ENCODE measurements at regions of chr22 and their contacts with region 1.

Region 1: GRCh38 chr22:39490135-39490798 is 11.8 kb upstream of the MIEF1 start:
- DNase-seq: no peak
- H3K4me3 ChIP-seq: no peak overlapping the region
- H3K27me3 ChIP-seq: no peaks in the 10 kb centered on the region
- CTCF ChIP-seq: no peak

Region 2: DNA sequence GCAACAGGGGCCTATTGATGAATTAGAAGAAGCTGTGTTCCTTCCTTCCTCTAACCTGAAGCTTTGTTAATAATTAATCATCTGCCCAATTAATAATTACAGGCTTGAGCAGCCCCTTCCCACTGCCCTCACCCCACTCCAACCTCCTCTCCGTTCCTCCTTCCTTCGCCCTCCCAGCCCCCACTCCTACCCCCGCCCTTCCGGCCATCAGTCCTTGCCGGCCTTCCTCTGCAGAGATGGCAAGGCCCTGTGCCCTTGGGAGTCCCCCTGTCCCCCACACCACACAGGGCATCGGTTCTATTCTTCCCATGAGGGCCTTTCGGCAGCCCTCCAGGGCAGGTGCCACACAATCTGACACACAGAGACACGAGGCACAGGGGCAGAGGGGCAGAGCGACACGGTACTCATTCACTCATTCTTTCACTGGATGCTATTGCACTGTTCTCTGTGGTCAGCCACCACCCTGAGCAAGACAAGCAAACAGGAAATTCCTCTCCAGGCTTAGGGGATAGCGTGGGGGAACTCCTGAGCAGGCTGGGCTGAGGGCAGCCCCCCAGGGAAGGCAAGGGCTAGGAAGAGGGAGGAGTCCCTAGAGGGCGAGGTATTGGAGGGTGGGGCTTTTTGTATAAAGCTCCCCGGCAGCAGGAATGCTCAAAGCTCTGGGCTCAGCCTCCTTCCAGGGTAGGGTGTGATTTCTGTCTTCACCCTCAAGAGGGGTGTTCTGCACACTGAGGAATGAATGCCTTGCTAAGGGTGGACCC is 18.7 kb before region 1 on chr22:
- CTCF ChIA-PET with region 1: interaction called, 14 read pairs
- POLR2A ChIA-PET with region 1: no interaction called
- DNase-seq: peak; percentile 30
- H3K4me3 ChIP-seq: no peak overlapping the region
- H3K27me3 ChIP-seq: no peaks in the 10 kb centered on the region
- CTCF ChIP-seq: no peak

Region 3: DNA sequence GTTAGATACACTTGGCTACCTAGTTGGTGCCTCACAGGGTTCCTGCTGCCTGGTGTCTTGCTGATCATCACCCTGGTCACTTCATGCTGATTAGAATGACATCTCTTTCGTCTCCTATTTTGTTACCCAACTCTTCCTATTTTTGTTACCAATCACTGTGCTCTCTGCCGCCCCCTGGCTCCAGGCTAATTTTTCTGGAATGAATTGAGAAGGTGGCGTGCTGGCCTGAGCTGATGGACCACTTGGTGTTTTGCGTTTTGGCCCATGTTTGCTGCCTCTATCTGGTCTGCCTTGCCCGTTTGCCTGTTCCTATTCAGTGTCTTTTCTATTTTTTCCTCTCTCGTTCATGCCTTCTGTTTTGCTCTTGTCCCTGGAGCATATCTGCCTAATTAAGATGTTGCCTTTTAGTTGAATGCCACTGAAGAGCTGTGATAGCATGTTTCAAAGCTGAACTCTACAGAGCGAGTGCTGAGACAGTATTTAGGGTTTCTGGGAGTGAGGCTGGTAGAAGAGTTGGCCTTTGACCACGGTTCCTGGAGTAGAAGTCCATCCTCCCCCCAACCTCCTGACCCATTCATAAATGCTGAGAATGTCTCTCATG is 24.2 kb after region 1 on chr22:
- CTCF ChIA-PET with region 1: interaction called, 22 read pairs
- POLR2A ChIA-PET with region 1: no interaction called
- DNase-seq: no peak
- H3K4me3 ChIP-seq: no peak overlapping the region
- H3K27me3 ChIP-seq: no peaks in the 10 kb centered on the region
- CTCF ChIP-seq: peak; percentile 85

Region 4: DNA sequence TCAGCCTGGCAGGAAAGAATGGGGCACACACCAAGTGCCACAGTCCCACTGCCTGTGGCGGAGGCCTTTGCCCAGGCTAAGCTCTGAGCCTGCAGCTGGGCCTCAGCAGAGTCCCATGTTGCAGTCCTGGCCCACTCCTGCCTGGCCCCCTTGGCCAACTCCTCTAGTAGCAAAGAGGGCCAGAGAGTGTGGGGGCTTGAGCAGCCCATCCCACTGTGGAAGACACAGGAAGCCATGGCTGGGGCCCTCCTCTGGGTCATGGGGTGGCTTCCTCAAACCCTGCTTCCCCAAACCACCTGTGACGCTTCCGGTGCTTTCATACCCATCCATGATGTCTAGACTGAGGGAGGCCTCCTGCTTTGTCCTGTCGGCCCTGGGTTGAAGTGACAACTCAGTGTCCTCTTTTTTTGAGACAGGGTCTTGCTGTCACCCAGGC is 36.5 kb after region 1 on chr22:
- CTCF ChIA-PET with region 1: interaction called, 35 read pairs
- POLR2A ChIA-PET with region 1: interaction called, 5 read pairs
- DNase-seq: no peak
- H3K4me3 ChIP-seq: no peak overlapping the region
- H3K27me3 ChIP-seq: no peaks in the 10 kb centered on the region
- CTCF ChIP-seq: no peak

Region 5: GRCh38 chr22:39612811-39613548 is 122.7 kb after region 1 on chr22:
- CTCF ChIA-PET with region 1: no interaction called
- POLR2A ChIA-PET with region 1: no interaction called
- DNase-seq: no peak
- H3K4me3 ChIP-seq: no peak overlapping the region
- H3K27me3 ChIP-seq: peaks cover 2% of the 10 kb centered on the region; the same call in 1 of the 2 replicates
- CTCF ChIP-seq: no peak

Measured in BJ (cell line).